Activated B cell treated with CpG ODN at 0.5 μM for 24 hours (primary cell): ENCODE measurements at regions of chr10 and their contacts with region 1.

Region 1: GRCh38 chr10:69408318-69409175 is 8.2 kb downstream of the TACR2 start:
- DNase-seq: peak; percentile 83
- ATAC-seq: peak; percentile 82
- H3K4me3 Mint-ChIP-seq: peak overlapping the region; percentile 69
- H3K27ac Mint-ChIP-seq: peak overlapping the region; percentile 83
- H3K4me1 Mint-ChIP-seq: peaks cover 28% of the 10 kb centered on the region
- H3K27me3 Mint-ChIP-seq: no peaks in the 10 kb centered on the region
- CTCF ChIP-seq: no peak

Region 2: DNA sequence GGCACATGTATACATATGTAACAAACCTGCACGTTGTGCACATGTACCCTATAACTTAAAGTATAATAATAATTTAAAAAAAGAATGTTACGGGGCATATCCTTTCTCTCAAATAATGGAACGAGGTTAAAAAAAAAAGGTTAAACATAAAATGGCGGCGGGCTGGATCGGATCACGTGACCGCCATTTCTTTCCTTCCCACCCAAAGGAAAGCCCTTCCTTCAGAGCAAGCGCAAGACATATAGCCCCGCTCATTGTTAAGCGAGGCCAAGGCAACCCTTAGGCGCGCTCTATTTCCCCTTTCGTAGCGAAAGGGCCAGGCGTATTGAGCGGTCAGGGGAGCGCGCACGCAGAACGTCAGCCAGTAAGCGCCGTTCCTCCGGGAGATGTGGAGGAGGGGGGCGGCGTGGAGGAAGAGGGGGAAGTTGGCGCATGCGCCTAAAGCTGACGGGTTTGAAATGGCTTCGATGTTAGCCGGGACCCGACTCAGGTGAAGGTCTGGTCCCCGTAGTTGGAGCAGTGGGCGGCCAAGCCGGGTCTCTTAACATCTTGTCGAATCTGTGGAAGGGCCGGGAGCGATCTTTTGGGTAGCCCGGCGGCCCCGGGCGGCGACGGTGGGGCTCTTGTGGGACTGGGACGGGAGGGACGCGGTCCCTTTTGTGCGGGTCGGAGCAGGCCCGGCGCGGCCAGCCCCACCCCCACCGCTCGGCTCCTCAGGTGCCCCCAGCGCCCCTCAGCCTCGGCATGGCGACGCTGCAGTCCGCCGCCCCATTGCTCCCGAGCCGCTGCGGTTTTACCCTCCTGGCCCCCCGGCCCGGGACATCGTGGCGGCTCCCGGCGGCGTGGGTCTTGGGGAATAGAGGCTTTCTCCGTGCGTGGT is 687.5 kb before region 1 on chr10 and contains the start of gene CCAR1:
- CTCF ChIA-PET with region 1: no interaction called
- POLR2A ChIA-PET with region 1: no interaction called
- intact Hi-C with region 1: loop called (anchors 2 kb)
- DNase-seq: peak; percentile 93
- ATAC-seq: peak; percentile 98
- H3K4me3 Mint-ChIP-seq: peak within 1 kb of the TSS; percentile 92
- H3K27ac Mint-ChIP-seq: peak within 1 kb of the TSS; percentile 98
- H3K4me1 Mint-ChIP-seq: peaks cover 14% of the 10 kb centered on the region
- H3K27me3 Mint-ChIP-seq: no peaks in the 10 kb centered on the region
- CTCF ChIP-seq: no peak
- total RNA-seq, gene CCAR1: 88.2 and 98.8 TPM in 2 replicates

Region 3: GRCh38 chr10:69087590-69088470 is 320.7 kb before region 1 on chr10 and contains the start of gene SRGN:
- CTCF ChIA-PET with region 1: no interaction called
- POLR2A ChIA-PET with region 1: no interaction called
- intact Hi-C with region 1: loop called (anchors 1 kb)
- DNase-seq: peak; percentile 26
- ATAC-seq: peak; percentile 71
- H3K4me3 Mint-ChIP-seq: peak within 1 kb of the TSS; percentile 84
- H3K27ac Mint-ChIP-seq: peak within 1 kb of the TSS; percentile 95
- H3K4me1 Mint-ChIP-seq: peaks cover 56% of the 10 kb centered on the region
- H3K27me3 Mint-ChIP-seq: no peaks in the 10 kb centered on the region
- CTCF ChIP-seq: no peak
- total RNA-seq, gene SRGN: 91.4 and 95.5 TPM in 2 replicates

Region 4: DNA sequence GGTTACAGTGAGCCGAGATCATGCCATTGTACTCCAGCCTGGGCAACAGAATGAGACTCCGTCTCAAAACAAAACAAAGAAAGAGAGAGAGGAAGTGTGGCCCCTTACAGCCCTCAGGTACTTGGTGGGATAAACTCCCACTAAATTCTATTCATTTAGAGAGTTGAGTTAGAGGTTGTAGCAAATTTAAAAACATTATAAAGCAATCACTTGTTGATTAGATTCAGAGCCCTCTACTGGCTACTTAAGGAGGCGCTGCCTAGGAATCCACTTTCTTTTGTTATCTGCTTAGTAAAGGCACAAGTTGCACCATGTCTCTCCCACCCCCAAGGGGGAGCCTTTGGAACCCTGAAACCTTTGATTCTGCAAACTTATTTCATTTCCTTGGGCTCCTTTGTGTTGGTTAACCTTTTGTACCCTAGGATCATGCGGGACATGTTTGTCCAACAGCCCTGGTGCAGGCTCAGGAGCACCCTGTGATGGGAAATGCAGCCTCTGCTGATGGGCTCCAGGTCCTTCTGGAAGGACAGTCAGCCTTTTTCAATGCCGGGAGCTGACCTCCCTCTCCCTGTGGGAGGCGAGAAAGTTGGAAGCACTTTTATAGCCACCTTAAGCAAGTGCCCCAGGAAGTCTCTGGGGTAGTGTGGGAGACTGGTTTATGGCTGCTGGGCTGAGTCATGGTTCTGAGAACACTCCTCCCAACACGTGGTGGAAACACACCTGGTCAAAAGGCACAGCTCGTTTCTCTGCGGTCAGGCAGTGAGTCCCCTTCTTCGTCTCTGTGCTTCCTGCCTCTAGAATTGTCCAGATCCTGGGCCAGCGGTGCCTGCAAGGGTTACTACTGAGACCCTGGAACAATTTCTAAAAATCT is 186.2 kb before region 1 on chr10:
- CTCF ChIA-PET with region 1: no interaction called
- POLR2A ChIA-PET with region 1: interaction called, 13 read pairs
- intact Hi-C with region 1: no loop called
- DNase-seq: peak; percentile 29
- ATAC-seq: peak; percentile 85
- H3K4me3 Mint-ChIP-seq: peak overlapping the region; percentile 53
- H3K27ac Mint-ChIP-seq: peak overlapping the region; percentile 68
- H3K4me1 Mint-ChIP-seq: peaks cover 29% of the 10 kb centered on the region
- H3K27me3 Mint-ChIP-seq: no peaks in the 10 kb centered on the region
- CTCF ChIP-seq: no peak

Region 5: GRCh38 chr10:69392481-69393000 is 16.0 kb before region 1 on chr10:
- CTCF ChIA-PET with region 1: interaction called, 15 read pairs
- POLR2A ChIA-PET with region 1: interaction called, 15 read pairs
- intact Hi-C with region 1: loop called (anchors 1 kb)
- DNase-seq: peak; percentile 62
- ATAC-seq: peak; percentile 99
- H3K4me3 Mint-ChIP-seq: no peak overlapping the region
- H3K27ac Mint-ChIP-seq: no peak overlapping the region
- H3K4me1 Mint-ChIP-seq: peaks cover 16% of the 10 kb centered on the region
- H3K27me3 Mint-ChIP-seq: no peaks in the 10 kb centered on the region
- CTCF ChIP-seq: peak; percentile 94

Region 6: GRCh38 chr10:69506834-69507721 is 98.5 kb after region 1 on chr10:
- CTCF ChIA-PET with region 1: interaction called, 20 read pairs
- POLR2A ChIA-PET with region 1: interaction called, 7 read pairs
- intact Hi-C with region 1: loop called (anchors 1 kb)
- DNase-seq: no peak
- ATAC-seq: no peak
- H3K4me3 Mint-ChIP-seq: peak overlapping the region; percentile 59
- H3K27ac Mint-ChIP-seq: no peak overlapping the region
- H3K4me1 Mint-ChIP-seq: peaks cover 5% of the 10 kb centered on the region
- H3K27me3 Mint-ChIP-seq: peaks cover 18% of the 10 kb centered on the region
- CTCF ChIP-seq: no peak

Region 7: DNA sequence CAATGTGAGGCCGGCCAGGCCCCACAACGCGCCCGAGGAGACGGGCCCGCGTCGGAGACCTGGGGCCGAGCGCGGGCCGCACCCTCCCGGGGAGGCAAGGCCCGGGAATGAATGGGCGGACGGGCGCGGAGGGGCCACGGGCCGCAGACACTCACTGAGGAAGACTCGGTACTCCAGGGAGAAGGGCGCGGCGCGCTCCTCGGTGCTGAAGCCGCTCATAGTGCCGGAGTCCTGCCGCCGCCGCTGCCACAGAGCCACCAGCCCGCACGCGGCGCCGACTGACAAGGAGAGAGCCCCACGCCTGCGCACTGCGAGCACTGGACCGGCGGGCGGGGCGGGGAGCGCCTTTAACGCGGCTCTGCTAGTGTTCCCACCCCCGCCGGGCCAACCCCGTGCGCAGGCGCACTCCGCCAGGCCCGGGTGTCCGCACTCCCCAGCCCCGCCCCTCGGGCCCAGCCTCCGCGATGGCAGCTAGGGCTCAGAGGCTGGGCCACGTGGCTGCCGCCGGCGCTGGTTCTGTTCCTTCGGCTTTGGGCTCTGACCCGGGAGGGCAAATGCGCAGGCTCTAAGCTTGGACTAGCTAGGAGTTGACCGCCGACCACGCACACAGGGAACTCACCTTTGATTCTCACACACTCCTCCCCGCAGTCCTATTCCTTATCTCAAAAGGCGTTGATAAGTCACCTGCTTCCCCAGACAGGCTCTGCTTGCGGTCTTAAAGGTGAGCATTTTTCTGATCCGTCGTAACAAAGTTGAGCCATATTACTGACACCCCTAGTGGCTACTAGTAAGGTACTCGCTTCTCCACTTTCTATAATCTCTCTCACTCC is 824.8 kb after region 1 on chr10 and contains the start of gene PPA1:
- CTCF ChIA-PET with region 1: no interaction called
- POLR2A ChIA-PET with region 1: no interaction called
- intact Hi-C with region 1: loop called (anchors 5 kb)
- DNase-seq: peak; percentile 100
- ATAC-seq: peak; percentile 96
- H3K4me3 Mint-ChIP-seq: peak within 1 kb of the TSS; percentile 92
- H3K27ac Mint-ChIP-seq: peak within 1 kb of the TSS; percentile 92
- H3K4me1 Mint-ChIP-seq: peaks cover 17% of the 10 kb centered on the region
- H3K27me3 Mint-ChIP-seq: no peaks in the 10 kb centered on the region
- CTCF ChIP-seq: no peak
- total RNA-seq, gene PPA1: 107 and 118 TPM in 2 replicates